ENCODE measurements at regions of chr3 and their contacts with region 1.

Region 1: GRCh38 chr3:17645072-17645698 is 97.2 kb downstream of the TBC1D5 start:
- DNase-seq: peak; percentile 6 to 53
- H3K4me3 ChIP-seq: no peak overlapping the region
- H3K27ac ChIP-seq: no peak overlapping the region
- H3K4me1 ChIP-seq: peaks cover 9% of the 10 kb centered on the region; the same call in 1 of the 2 replicates
- H3K27me3 ChIP-seq: no peaks in the 10 kb centered on the region
- CTCF ChIP-seq: peak; percentile 83

Region 2: DNA sequence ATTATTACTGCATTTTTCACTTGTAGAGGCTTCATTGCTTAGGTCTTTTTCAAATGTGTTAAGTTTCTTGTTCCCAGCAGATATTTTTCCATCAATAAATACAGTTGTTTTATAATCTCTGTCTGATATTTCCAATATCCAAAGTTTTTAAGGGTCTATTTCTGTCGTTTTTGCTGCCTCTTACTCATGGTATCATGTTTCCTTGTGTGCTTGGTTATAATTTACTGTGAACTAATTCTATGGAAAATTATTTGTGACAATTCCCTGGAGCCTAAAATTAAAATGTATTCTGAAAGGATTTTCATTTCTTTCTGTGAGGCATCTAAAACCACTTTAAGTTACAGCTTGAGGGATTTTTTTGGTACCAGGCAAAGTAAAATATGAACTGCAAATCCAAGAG is 79.8 kb after region 1 on chr3:
- CTCF ChIA-PET with region 1: no interaction called
- POLR2A ChIA-PET with region 1: no interaction called
- intact Hi-C with region 1: loop called (anchors 5 kb)
- DNase-seq: no peak
- H3K4me3 ChIP-seq: no peak overlapping the region
- H3K27ac ChIP-seq: no peak overlapping the region
- H3K4me1 ChIP-seq: no peaks in the 10 kb centered on the region
- H3K27me3 ChIP-seq: no peaks in the 10 kb centered on the region
- CTCF ChIP-seq: no peak

Region 3: GRCh38 chr3:17831366-17831765 is 186.2 kb after region 1 on chr3:
- CTCF ChIA-PET with region 1: no interaction called
- POLR2A ChIA-PET with region 1: no interaction called
- intact Hi-C with region 1: loop called (anchors 10 kb)
- DNase-seq: peak in 1 of 2 experiments; percentile 39
- H3K4me3 ChIP-seq: no peak overlapping the region
- H3K27ac ChIP-seq: no peak overlapping the region
- H3K4me1 ChIP-seq: peaks cover 5% of the 10 kb centered on the region; the same call in 1 of the 2 replicates
- H3K27me3 ChIP-seq: no peaks in the 10 kb centered on the region
- CTCF ChIP-seq: no peak

Measured in PC-9 (cell line).